Activated T-helper 1 cell treated with anti-CD3 and anti-CD28 coated beads, Interleukin-12 subunit alpha, Interleukin-12 subunit beta, Interleukin-2, Interleukin-4 antibody, amounts not matched to agents 30 ng/mL and 10 ng/mL and 1 ng/mL, durations not matched to agents 14 hours and 24 hours and 36 hours (primary cell): ENCODE measurements at regions of chr6 and their contacts with region 1.

Region 1: DNA sequence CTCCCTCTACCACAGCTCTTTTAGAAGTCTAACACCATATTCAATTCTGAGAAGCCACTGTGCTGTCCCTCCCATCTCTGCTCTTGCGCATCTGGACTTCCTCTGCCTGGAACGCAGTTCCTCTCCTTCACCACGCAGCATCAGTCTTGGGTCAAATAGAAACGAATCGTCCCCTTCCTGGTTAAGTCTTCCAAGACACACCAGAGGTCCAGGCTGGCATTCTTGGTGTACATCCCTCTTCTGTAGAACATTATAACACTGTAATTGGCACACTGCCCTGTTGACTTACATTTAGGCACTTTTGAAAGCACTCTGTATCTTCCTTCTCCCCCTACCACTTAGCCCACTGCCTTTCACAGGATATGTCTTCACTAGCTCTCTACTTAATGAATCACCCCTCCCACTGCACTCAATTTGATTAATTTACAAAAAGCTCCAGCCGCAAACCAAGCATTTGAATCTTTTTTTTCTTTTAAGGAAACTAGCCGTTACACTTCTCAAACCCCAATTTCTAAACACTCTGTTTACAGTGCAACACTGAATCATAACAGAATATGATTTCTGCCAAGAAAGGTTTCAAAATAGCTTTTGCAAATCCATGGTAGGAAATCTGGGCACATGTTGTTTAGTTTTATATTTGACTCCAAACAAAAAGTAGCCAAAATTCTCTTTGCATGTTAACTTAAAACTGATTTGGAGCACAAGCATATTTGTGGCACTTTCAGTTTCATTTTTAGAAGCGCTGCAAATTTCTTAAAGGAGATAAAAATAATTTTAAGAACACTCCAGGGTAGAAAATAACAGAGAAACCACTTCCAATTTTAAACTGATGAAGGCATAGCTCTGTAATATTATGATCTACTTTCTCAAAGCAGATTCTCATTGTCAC is 140.7 kb upstream of the CARMIL1 start:
- DNase-seq: peak; percentile 72
- H3K4me3 Mint-ChIP-seq: peak overlapping the region; percentile 90
- H3K27ac Mint-ChIP-seq: peak overlapping the region; percentile 97
- H3K4me1 Mint-ChIP-seq: peaks cover 41% of the 10 kb centered on the region
- H3K27me3 Mint-ChIP-seq: no peaks in the 10 kb centered on the region

Region 2: GRCh38 chr6:24927985-24928745 is 210.3 kb before region 1 on chr6:
- intact Hi-C with region 1: loop called (anchors 1 kb)
- DNase-seq: no peak
- H3K4me3 Mint-ChIP-seq: peak overlapping the region; percentile 92
- H3K27ac Mint-ChIP-seq: peak overlapping the region; percentile 97
- H3K4me1 Mint-ChIP-seq: peaks cover 90% of the 10 kb centered on the region
- H3K27me3 Mint-ChIP-seq: no peaks in the 10 kb centered on the region

Region 3: GRCh38 chr6:25042036-25042521 is 96.4 kb before region 1 on chr6:
- intact Hi-C with region 1: loop called (anchors 2 kb)
- DNase-seq: peak; percentile 30
- H3K4me3 Mint-ChIP-seq: peak overlapping the region; percentile 88
- H3K27ac Mint-ChIP-seq: peak overlapping the region; percentile 95
- H3K4me1 Mint-ChIP-seq: peaks cover 66% of the 10 kb centered on the region
- H3K27me3 Mint-ChIP-seq: no peaks in the 10 kb centered on the region

Region 4: DNA sequence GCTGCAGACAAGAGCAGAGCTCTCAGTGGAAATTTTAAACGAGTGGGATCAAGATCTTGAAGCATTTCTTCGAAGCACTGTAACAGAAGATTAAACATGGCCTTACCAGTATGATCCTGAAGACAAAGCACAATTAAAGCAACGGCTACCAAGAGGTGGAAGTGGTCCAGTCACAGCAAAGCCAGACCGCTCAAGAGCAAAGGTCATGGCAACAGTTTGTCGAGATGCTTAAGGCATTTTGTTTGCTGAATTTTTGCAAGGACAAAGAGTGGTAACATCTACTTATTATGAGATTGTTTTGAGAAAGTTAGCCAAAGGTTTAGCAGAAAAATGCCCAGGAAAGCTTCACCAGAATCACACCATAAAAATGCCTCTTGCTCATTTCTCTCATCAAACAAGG is 12.7 kb before region 1 on chr6:
- intact Hi-C with region 1: no loop called
- DNase-seq: no peak
- H3K4me3 Mint-ChIP-seq: peak overlapping the region; percentile 40
- H3K27ac Mint-ChIP-seq: peak overlapping the region; percentile 40
- H3K4me1 Mint-ChIP-seq: peaks cover 77% of the 10 kb centered on the region
- H3K27me3 Mint-ChIP-seq: no peaks in the 10 kb centered on the region

Region 5: GRCh38 chr6:25173951-25174474 is 35.5 kb after region 1 on chr6:
- intact Hi-C with region 1: loop called (anchors 1 kb)
- DNase-seq: no peak
- H3K4me3 Mint-ChIP-seq: no peak overlapping the region
- H3K27ac Mint-ChIP-seq: peak overlapping the region; percentile 71
- H3K4me1 Mint-ChIP-seq: peaks cover 99% of the 10 kb centered on the region
- H3K27me3 Mint-ChIP-seq: no peaks in the 10 kb centered on the region

Region 6: GRCh38 chr6:25369433-25370181 is 231.1 kb after region 1 on chr6:
- intact Hi-C with region 1: loop called (anchors 5 kb)
- DNase-seq: peak; percentile 7
- H3K4me3 Mint-ChIP-seq: peak overlapping the region; percentile 62
- H3K27ac Mint-ChIP-seq: peak overlapping the region; percentile 91
- H3K4me1 Mint-ChIP-seq: peaks cover 73% of the 10 kb centered on the region
- H3K27me3 Mint-ChIP-seq: no peaks in the 10 kb centered on the region